ENCODE measurements at regions of chr14 and their contacts with region 1.

Region 1: DNA sequence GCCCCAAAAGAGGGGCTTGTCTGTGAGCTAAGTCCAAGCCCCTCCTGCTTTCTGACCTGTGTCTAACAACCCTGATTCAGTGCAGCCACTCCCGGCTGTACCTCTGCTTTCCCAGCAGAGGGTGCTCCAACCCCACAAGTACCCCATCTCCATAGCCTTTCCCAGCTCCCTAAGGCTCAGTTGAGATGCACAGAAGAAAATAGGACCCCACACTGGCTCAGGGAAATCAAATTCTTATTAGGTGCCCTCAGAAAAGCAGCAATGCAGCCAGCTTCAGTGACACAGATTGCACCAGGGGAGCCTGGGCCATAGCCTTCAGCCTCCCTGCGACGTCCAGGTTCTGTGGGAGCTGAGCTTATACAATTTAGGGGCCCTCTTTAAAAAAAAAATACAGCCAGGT is 49.9 kb downstream of the LRRC74A start:
- DNase-seq: peak; percentile 75
- H3K4me3 Mint-ChIP-seq: no peak overlapping the region
- H3K27ac Mint-ChIP-seq: no peak overlapping the region
- H3K4me1 Mint-ChIP-seq: no peaks in the 10 kb centered on the region
- H3K27me3 Mint-ChIP-seq: peaks cover 1% of the 10 kb centered on the region
- CTCF ChIP-seq: peak; percentile 95

Region 2: GRCh38 chr14:76710056-76711010 is 165.7 kb before region 1 on chr14:
- CTCF ChIA-PET with region 1: interaction called, 17 read pairs
- POLR2A ChIA-PET with region 1: no interaction called
- intact Hi-C with region 1: no loop called
- DNase-seq: peak; percentile 67
- H3K4me3 Mint-ChIP-seq: no peak overlapping the region
- H3K27ac Mint-ChIP-seq: no peak overlapping the region
- H3K4me1 Mint-ChIP-seq: no peaks in the 10 kb centered on the region
- H3K27me3 Mint-ChIP-seq: peaks cover 25% of the 10 kb centered on the region
- CTCF ChIP-seq: peak; percentile 41

Region 3: GRCh38 chr14:76742966-76743365 is 133.1 kb before region 1 on chr14:
- CTCF ChIA-PET with region 1: no interaction called
- POLR2A ChIA-PET with region 1: no interaction called
- intact Hi-C with region 1: no loop called
- DNase-seq: peak; percentile 54
- H3K4me3 Mint-ChIP-seq: no peak overlapping the region
- H3K27ac Mint-ChIP-seq: no peak overlapping the region
- H3K4me1 Mint-ChIP-seq: no peaks in the 10 kb centered on the region
- H3K27me3 Mint-ChIP-seq: peaks cover 54% of the 10 kb centered on the region
- CTCF ChIP-seq: no peak

Region 4: GRCh38 chr14:76894308-76894892 is 18.3 kb after region 1 on chr14:
- CTCF ChIA-PET with region 1: interaction called, 58 read pairs
- POLR2A ChIA-PET with region 1: no interaction called
- intact Hi-C with region 1: no loop called
- DNase-seq: no peak
- H3K4me3 Mint-ChIP-seq: no peak overlapping the region
- H3K27ac Mint-ChIP-seq: no peak overlapping the region
- H3K4me1 Mint-ChIP-seq: no peaks in the 10 kb centered on the region
- H3K27me3 Mint-ChIP-seq: no peaks in the 10 kb centered on the region
- CTCF ChIP-seq: no peak

Region 5: DNA sequence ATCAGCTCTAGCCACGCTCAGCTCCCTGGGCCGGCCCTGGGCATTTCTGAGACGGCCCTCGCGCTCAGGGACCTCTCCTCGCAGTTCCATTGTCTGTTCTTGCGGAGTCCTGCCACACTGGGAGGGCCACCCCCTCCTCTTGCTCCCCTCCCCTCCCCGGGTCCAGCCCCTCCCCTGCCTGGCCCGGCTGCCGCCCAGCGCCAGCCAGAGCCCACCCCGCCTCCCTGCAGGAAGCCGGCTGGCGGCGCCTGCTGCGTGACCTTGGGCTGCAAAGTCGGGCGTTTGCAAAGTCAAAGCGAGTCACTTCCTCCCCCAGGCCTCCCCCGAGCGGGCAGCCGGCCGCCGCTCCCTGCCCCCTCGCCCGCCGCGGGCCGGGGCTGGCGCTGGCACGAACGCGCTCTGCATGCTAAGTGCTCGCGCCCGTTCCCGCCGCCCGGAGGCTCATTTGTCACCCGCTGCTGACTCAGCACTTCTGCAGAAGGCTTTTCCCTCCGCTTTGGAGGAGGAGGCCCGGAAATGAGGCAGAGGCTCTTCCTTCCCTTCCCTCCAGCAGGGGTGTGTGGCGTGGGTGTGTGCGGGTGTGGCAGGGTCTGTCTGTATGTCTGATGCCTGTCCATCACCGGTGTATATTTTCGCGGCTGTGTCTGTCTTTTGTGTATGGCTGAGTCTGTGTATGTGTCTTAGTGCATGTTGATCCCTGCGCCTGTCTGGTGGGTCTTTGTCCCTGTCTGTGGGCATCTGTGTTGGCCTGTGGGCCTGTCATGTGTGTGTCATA is 80.4 kb after region 1 on chr14:
- CTCF ChIA-PET with region 1: interaction called, 13 read pairs
- POLR2A ChIA-PET with region 1: interaction called, 8 read pairs
- intact Hi-C with region 1: no loop called
- DNase-seq: peak; percentile 97
- H3K4me3 Mint-ChIP-seq: peak overlapping the region; percentile 49
- H3K27ac Mint-ChIP-seq: peak overlapping the region; percentile 92
- H3K4me1 Mint-ChIP-seq: peaks cover 55% of the 10 kb centered on the region
- H3K27me3 Mint-ChIP-seq: no peaks in the 10 kb centered on the region
- CTCF ChIP-seq: no peak

Region 6: DNA sequence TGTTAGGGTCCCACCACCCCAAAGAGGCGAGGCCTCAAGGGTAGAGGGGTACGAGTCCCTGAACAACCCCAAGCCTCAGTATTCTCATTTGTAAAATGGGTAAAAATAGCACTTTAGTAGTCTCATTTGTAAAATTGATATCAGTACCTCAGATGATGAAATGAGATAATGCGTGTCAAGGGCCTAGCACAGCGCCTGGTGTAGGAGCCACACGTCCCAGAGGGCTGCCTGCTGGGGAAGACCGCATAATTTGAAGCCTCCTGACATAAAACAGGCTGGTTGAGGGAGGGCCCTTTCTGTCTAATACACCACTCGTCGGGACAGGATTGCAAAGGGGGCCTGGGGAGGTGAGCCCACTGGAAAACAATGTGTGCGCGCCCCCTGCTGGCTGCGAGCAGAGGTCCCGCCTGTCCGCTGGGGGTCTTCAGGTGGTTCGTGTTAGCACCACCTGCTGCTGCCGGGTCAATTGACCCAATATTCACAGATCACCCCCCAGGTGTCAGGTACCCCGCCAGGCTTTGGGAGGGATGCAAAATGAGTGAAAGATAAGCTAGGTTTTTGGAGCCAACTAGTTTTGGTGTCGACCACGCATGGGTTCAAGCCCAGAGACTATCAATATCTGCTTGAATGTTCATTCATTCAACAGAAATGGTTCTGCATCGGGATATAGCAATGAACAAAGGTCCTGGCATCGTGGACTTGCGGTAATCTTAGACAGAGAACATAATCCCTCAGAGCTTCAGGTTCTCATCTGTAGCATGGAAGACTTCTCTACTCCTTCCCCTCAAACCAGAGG is 177.2 kb after region 1 on chr14:
- CTCF ChIA-PET with region 1: interaction called, 33 read pairs
- POLR2A ChIA-PET with region 1: no interaction called
- intact Hi-C with region 1: no loop called
- DNase-seq: peak; percentile 63
- H3K4me3 Mint-ChIP-seq: no peak overlapping the region
- H3K27ac Mint-ChIP-seq: peak overlapping the region; percentile 90
- H3K4me1 Mint-ChIP-seq: peaks cover 15% of the 10 kb centered on the region
- H3K27me3 Mint-ChIP-seq: no peaks in the 10 kb centered on the region
- CTCF ChIP-seq: peak; percentile 71

Region 7: DNA sequence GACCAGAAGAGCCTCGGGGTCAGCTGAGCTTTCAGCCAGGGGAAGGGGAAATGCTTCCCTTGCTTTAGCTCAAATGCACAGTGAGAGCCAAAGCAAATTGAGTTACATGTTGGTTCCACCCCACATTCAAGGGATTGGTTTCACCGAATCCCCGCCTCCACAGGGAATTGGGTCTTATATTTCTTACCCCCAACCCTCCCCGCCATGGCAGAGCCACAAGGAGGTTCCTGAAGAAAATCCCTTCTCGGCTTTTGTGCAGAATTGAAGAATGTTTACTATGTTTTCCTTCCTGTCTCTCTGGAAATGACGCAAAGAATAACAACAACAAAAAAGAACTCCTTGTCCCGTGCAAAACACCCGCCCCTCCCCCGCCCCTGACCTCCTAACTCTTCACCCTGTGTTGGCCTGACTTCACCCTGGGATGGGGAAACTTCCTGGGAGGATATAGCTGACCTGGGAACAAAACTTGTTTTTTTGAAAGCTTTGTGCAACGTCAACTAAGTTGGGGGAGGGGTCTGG is 200.1 kb after region 1 on chr14:
- CTCF ChIA-PET with region 1: interaction called, 523 read pairs
- POLR2A ChIA-PET with region 1: interaction called, 22 read pairs
- intact Hi-C with region 1: no loop called
- DNase-seq: peak; percentile 96
- H3K4me3 Mint-ChIP-seq: peak overlapping the region; percentile 43
- H3K27ac Mint-ChIP-seq: peak overlapping the region; percentile 76
- H3K4me1 Mint-ChIP-seq: peaks cover 20% of the 10 kb centered on the region
- H3K27me3 Mint-ChIP-seq: no peaks in the 10 kb centered on the region
- CTCF ChIP-seq: no peak

Region 8: DNA sequence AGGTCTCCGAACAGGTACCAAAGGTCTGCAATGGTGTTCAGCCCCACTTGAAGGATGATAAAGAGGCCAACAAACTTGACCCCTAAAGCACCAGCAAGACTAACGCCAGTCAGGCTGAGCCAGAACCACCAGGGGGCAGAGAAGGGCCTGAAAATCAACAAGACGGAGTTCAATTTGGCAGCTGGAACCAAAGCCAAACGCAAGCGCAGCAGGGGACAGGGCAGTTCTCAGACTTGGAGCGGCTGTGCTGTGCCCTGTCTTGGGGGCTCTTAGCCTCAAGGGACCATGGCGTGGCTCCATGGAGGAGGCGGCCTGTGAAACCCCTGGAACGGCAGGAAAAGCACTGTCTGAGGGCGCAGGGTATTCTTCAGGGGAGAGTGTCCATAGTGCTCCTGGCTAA is 425.0 kb after region 1 on chr14:
- CTCF ChIA-PET with region 1: interaction called, 3 read pairs
- POLR2A ChIA-PET with region 1: no interaction called
- intact Hi-C with region 1: loop called (anchors 10 kb)
- DNase-seq: peak; percentile 75
- H3K4me3 Mint-ChIP-seq: no peak overlapping the region
- H3K27ac Mint-ChIP-seq: no peak overlapping the region
- H3K4me1 Mint-ChIP-seq: peaks cover 24% of the 10 kb centered on the region
- H3K27me3 Mint-ChIP-seq: no peaks in the 10 kb centered on the region
- CTCF ChIP-seq: peak; percentile 83

Measured in MCF 10A (cell line).